A549 (cell line): ENCODE measurements at regions of chr11 and their contacts with region 1.

Region 1: GRCh38 chr11:8018484-8019313 is 31.6 kb downstream of the EIF3F start:
- DNase-seq: peak; percentile 32 to 51
- ATAC-seq: peak; percentile 75 to 83
- H3K4me3 ChIP-seq: peak overlapping the region; percentile 61
- H3K27ac ChIP-seq: peak overlapping the region in 1 of 2 experiments; percentile 71; a peak in 3 of 6 replicates
- H3K4me1 ChIP-seq: no peaks in the 10 kb centered on the region; the same call in 2 of the 3 replicates
- CTCF ChIP-seq: no peak
- EP300 ChIP-seq: no peak
- POLR2A ChIP-seq: no peak
- RAD21 ChIP-seq: no peak

Region 2: GRCh38 chr11:8105666-8106065 is 87.0 kb after region 1 on chr11:
- CTCF ChIA-PET with region 1: interaction called, 28 read pairs
- POLR2A ChIA-PET with region 1: interaction called, 10 read pairs
- DNase-seq: no peak
- ATAC-seq: no peak
- H3K4me3 ChIP-seq: no peak overlapping the region
- H3K27ac ChIP-seq: no peak overlapping the region
- H3K4me1 ChIP-seq: no peaks in the 10 kb centered on the region
- CTCF ChIP-seq: no peak
- EP300 ChIP-seq: no peak
- POLR2A ChIP-seq: no peak
- RAD21 ChIP-seq: no peak